HEK293 (cell line): ENCODE measurements at regions of chr4 and their contacts with region 1.

Region 1: GRCh38 chr4:173257732-173258717 is 76.1 kb downstream of the HMGB2 start:
- H3K4me3 ChIP-seq: no peak overlapping the region
- H3K27ac ChIP-seq: no peak overlapping the region
- H3K4me1 ChIP-seq: no peaks in the 10 kb centered on the region; the same call in 1 of the 2 replicates
- CTCF ChIP-seq: no peak

Region 2: DNA sequence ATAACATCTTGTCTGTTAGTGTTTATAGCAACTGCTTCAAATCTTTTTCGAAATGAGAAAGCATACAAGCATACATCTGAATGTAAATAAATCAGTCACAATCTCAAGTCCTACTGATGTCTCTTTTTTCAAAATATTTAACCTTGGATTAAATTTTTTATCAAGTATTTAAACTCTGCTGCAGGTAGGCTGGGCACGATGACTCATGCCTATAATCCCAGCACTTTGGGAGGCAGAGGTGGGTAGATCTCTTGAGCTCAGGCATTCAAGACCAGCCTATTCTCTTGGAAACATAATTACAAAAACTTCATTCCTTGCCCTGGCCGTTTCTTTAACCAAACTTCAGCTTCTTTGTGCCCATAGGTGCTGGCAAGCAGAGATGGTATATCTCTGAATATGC is 629.8 kb before region 1 on chr4:
- CTCF ChIA-PET with region 1: no interaction called
- POLR2A ChIA-PET with region 1: no interaction called
- H3K4me3 ChIP-seq: no peak overlapping the region
- H3K27ac ChIP-seq: no peak overlapping the region
- H3K4me1 ChIP-seq: no peaks in the 10 kb centered on the region
- CTCF ChIP-seq: no peak

Region 3: GRCh38 chr4:173013232-173013930 is 244.6 kb before region 1 on chr4:
- CTCF ChIA-PET with region 1: interaction called, 39 read pairs
- POLR2A ChIA-PET with region 1: no interaction called
- H3K4me3 ChIP-seq: no peak overlapping the region
- H3K27ac ChIP-seq: no peak overlapping the region
- H3K4me1 ChIP-seq: no peaks in the 10 kb centered on the region
- CTCF ChIP-seq: no peak

Region 4: DNA sequence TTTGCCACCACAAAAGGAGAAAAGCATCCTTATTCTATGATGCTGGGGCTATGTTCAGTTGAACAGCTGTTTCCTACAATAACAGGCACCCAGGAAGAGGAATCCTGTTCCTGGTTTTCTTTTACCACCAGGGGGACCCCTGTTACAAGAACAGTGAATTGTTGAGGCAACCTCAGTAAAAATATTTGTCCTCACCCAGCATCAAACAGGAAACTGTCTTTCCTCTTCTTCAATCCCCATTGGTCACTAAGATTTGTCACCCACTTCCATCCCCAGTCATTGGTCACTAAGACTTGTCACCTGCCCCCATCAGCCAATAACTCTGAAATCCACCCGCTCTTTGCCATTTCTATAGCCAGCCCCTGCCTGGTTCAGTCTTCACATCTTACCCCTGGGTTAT is 232.9 kb before region 1 on chr4:
- CTCF ChIA-PET with region 1: interaction called, 42 read pairs
- POLR2A ChIA-PET with region 1: no interaction called
- H3K4me3 ChIP-seq: no peak overlapping the region
- H3K27ac ChIP-seq: no peak overlapping the region
- H3K4me1 ChIP-seq: no peaks in the 10 kb centered on the region
- CTCF ChIP-seq: peak; percentile 33

Region 5: DNA sequence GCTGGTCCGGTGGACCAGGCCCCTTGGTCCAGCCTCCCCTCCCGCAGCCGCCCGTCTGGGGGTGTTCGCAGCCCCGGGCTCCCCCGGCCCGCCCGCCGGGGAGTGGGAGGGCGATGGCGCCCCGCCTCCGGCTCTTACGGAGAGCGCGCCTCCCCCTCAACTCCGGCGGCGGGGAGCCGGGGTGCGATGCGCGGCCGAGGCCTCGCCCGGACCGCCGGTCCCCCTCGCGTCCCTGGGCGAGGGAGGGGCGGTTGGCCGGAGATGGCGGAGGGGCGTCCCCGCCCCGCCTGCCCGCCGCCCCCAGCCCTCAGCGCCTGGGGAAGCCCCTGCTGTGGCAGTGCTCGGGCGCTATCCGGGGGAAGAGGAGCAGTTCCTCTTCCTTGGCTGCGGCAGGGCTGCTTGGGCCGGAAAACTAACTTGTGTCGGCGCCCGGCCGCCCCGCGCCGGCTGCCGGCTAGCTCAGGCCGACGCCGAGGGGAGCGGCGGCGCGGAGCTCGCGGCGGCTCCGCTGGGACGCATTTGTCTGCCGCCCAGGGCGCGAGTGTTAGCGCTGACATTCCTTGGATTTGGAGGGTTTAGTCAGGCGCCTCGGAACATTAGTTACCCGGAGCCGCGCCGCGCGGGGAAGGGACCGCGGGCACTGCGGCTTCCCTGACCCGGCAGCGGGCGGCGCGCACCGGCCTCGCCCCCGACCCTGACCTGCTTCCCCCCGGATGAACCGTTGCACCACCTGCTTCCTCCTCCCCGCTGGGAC is 88.4 kb before region 1 on chr4:
- CTCF ChIA-PET with region 1: interaction called, 12 read pairs
- POLR2A ChIA-PET with region 1: no interaction called
- H3K4me3 ChIP-seq: peak overlapping the region; percentile 88
- H3K27ac ChIP-seq: peak overlapping the region; percentile 88
- H3K4me1 ChIP-seq: peaks cover 17% of the 10 kb centered on the region
- CTCF ChIP-seq: no peak

Region 6: DNA sequence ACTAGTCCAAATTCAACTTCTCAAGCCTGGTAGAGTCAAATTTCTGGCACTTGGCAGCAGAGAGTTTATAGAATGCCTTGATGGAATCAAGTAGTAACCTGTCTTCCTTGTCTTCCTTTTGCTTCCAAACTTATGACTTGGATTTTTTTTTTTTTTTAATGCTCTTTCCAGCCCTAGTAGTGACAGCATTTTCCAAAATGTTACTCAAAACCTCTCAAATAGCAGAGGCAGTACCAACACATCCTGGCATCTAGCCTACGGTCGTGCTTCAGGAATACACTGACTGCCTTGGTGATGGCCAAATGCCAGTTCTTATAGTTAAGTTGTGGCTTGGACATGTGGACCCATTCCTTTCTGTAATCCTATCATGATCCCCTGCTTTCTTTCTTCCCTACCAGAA is 43.4 kb before region 1 on chr4:
- CTCF ChIA-PET with region 1: interaction called, 11 read pairs
- POLR2A ChIA-PET with region 1: no interaction called
- H3K4me3 ChIP-seq: no peak overlapping the region
- H3K27ac ChIP-seq: no peak overlapping the region
- H3K4me1 ChIP-seq: peaks cover 18% of the 10 kb centered on the region
- CTCF ChIP-seq: no peak

Region 7: GRCh38 chr4:173270312-173271027 is 12.4 kb after region 1 on chr4:
- CTCF ChIA-PET with region 1: interaction called, 13 read pairs
- POLR2A ChIA-PET with region 1: no interaction called
- H3K4me3 ChIP-seq: no peak overlapping the region
- H3K27ac ChIP-seq: no peak overlapping the region
- H3K4me1 ChIP-seq: peaks cover 12% of the 10 kb centered on the region
- CTCF ChIP-seq: no peak